T-cell (primary cell): ENCODE measurements at regions of chr12 and their contacts with region 1.

Region 1: GRCh38 chr12:22409377-22410164 is 75.1 kb upstream of the ST8SIA1 start:
- DNase-seq: peak in 34 of 35 experiments; percentile 5 to 83 (median 41)
- ATAC-seq: peak; percentile 85 to 94 (median 90)
- H3K4me3 ChIP-seq: peak overlapping the region in 1 of 2 donors; percentile 52
- H3K4me3 Mint-ChIP-seq: peak overlapping the region; percentile 67 to 79 (median 73)
- H3K27ac ChIP-seq: peak overlapping the region; percentile 83
- H3K27ac Mint-ChIP-seq: peak overlapping the region; percentile 89 to 91
- H3K4me1 ChIP-seq: peaks cover 0 to 17% of the 10 kb centered on the region in 2 experiments
- H3K4me1 Mint-ChIP-seq: peaks cover 16 to 42% (median 29%) of the 10 kb centered on the region in 3 donors
- H3K27me3 ChIP-seq: no peaks in the 10 kb centered on the region
- H3K27me3 Mint-ChIP-seq: no peaks in the 10 kb centered on the region

Region 2: GRCh38 chr12:21561158-21561557 is 848.4 kb before region 1 on chr12:
- CTCF ChIA-PET with region 1: no interaction called
- POLR2A ChIA-PET with region 1: interaction called in 1 of 2 experiments, 19 read pairs
- DNase-seq: no peak
- ATAC-seq: no peak
- H3K4me3 ChIP-seq: no peak overlapping the region
- H3K4me3 Mint-ChIP-seq: no peak overlapping the region
- H3K27ac ChIP-seq: no peak overlapping the region
- H3K27ac Mint-ChIP-seq: no peak overlapping the region
- H3K4me1 ChIP-seq: no peaks in the 10 kb centered on the region
- H3K4me1 Mint-ChIP-seq: peaks cover 0 to 2% (median 0%) of the 10 kb centered on the region in 3 donors
- H3K27me3 ChIP-seq: no peaks in the 10 kb centered on the region
- H3K27me3 Mint-ChIP-seq: peaks cover 0 to 4% of the 10 kb centered on the region in 2 donors

Region 3: DNA sequence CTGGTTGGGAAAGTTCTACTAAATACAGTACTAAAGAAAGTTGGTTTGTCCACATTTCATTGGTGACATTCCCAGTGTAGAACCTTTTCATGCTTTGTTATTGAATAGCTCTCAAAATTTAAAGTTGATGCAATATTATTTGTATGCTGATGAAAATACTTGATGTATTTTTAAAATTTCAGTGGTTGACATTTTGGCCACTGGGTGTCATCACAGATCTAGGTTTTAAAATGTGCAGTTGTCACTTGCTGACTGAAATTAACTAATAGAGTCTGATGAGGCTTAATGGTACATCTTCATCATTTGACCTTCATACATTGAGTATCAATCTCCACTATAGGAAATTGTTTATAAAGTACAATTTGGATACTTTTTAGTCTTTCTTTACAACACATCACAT is 326.4 kb before region 1 on chr12:
- CTCF ChIA-PET with region 1: interaction called, 3 to 19 read pairs
- POLR2A ChIA-PET with region 1: no interaction called
- DNase-seq: peak in 16 of 35 experiments; percentile 10 to 70 (median 22)
- ATAC-seq: peak in 2 of 4 experiments; percentile 41 to 49
- H3K4me3 ChIP-seq: no peak overlapping the region
- H3K4me3 Mint-ChIP-seq: no peak overlapping the region
- H3K27ac ChIP-seq: no peak overlapping the region
- H3K27ac Mint-ChIP-seq: no peak overlapping the region
- H3K4me1 ChIP-seq: no peaks in the 10 kb centered on the region
- H3K4me1 Mint-ChIP-seq: no peaks in the 10 kb centered on the region
- H3K27me3 ChIP-seq: no peaks in the 10 kb centered on the region
- H3K27me3 Mint-ChIP-seq: no peaks in the 10 kb centered on the region

Region 4: GRCh38 chr12:22396253-22396652 is 13.3 kb before region 1 on chr12:
- CTCF ChIA-PET with region 1: interaction called in 1 of 2 experiments, 10 read pairs
- POLR2A ChIA-PET with region 1: no interaction called
- DNase-seq: peak in 12 of 35 experiments; percentile 4 to 64 (median 9)
- ATAC-seq: peak; percentile 81 to 91 (median 84)
- H3K4me3 ChIP-seq: no peak overlapping the region
- H3K4me3 Mint-ChIP-seq: peak overlapping the region; percentile 57 to 65 (median 63)
- H3K27ac ChIP-seq: peak overlapping the region; percentile 76
- H3K27ac Mint-ChIP-seq: peak overlapping the region; percentile 92 to 94
- H3K4me1 ChIP-seq: peaks cover 19 to 27% of the 10 kb centered on the region in 2 experiments
- H3K4me1 Mint-ChIP-seq: peaks cover 42 to 51% (median 46%) of the 10 kb centered on the region in 3 donors
- H3K27me3 ChIP-seq: no peaks in the 10 kb centered on the region
- H3K27me3 Mint-ChIP-seq: no peaks in the 10 kb centered on the region

Region 5: GRCh38 chr12:23827353-23827752 is 1417.8 kb after region 1 on chr12:
- CTCF ChIA-PET with region 1: no interaction called
- POLR2A ChIA-PET with region 1: no interaction called
- DNase-seq: no peak
- ATAC-seq: no peak
- H3K4me3 ChIP-seq: no peak overlapping the region
- H3K4me3 Mint-ChIP-seq: no peak overlapping the region
- H3K27ac ChIP-seq: no peak overlapping the region
- H3K27ac Mint-ChIP-seq: no peak overlapping the region
- H3K4me1 ChIP-seq: no peaks in the 10 kb centered on the region
- H3K4me1 Mint-ChIP-seq: no peaks in the 10 kb centered on the region
- H3K27me3 ChIP-seq: no peaks in the 10 kb centered on the region
- H3K27me3 Mint-ChIP-seq: no peaks in the 10 kb centered on the region